Spleen (tissue), 13 donors: ENCODE measurements at regions of chr18 and their contacts with region 1.

Region 1: DNA sequence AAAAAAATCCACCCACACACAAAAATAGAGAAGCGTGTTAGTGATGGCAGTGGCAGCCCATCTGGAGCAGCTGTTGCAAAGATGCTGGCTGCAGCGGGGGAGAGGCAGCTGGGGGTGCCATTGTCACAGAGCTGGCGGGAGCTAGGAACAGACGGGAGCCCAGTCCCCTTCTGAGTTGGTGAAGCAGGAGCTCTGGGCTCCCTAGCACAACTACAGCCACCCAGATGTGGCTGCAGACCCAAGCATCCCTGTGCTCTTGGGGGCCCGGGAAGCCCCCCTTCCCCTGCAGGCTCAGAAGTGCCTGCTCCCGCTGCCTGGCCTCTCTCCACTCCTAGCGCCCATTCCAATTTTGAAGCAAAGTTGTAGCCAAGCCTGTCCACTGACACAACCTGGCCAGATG is 366.6 kb upstream of the MC4R start:
- DNase-seq: no peak
- H3K4me3 ChIP-seq: no peak overlapping the region
- H3K27ac ChIP-seq: no peak overlapping the region
- H3K4me1 ChIP-seq: no peaks in the 10 kb centered on the region
- H3K27me3 ChIP-seq: no peaks in the 10 kb centered on the region
- CTCF ChIP-seq: no peak
- POLR2A ChIP-seq: no peak

Region 2: DNA sequence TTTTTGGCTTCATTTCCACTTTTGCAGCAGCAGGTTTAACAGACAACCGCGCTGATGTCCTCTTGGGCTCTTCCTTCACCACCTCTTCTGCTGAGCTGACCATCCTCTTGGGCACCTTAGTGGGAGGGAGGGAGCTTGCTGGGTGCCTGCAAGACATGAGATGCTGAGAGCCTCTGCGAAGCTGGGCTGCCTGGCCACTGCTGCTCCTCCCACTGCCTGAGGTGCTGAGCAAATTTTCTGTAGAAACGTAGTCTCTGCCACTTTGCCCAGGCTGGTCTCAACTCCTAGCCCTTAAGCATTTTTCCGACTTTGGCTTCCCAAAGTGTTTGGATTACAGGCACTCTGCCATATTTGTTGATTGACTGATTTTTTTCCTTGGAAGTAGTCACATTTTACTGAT is 55.6 kb after region 1 on chr18:
- intact Hi-C with region 1: loop called (anchors 10 kb)
- DNase-seq: no peak
- H3K4me3 ChIP-seq: no peak overlapping the region
- H3K27ac ChIP-seq: no peak overlapping the region
- H3K4me1 ChIP-seq: no peaks in the 10 kb centered on the region
- H3K27me3 ChIP-seq: no peaks in the 10 kb centered on the region
- CTCF ChIP-seq: no peak
- POLR2A ChIP-seq: no peak